ENCODE measurements at regions of chr5 and their contacts with region 1.

Region 1: DNA sequence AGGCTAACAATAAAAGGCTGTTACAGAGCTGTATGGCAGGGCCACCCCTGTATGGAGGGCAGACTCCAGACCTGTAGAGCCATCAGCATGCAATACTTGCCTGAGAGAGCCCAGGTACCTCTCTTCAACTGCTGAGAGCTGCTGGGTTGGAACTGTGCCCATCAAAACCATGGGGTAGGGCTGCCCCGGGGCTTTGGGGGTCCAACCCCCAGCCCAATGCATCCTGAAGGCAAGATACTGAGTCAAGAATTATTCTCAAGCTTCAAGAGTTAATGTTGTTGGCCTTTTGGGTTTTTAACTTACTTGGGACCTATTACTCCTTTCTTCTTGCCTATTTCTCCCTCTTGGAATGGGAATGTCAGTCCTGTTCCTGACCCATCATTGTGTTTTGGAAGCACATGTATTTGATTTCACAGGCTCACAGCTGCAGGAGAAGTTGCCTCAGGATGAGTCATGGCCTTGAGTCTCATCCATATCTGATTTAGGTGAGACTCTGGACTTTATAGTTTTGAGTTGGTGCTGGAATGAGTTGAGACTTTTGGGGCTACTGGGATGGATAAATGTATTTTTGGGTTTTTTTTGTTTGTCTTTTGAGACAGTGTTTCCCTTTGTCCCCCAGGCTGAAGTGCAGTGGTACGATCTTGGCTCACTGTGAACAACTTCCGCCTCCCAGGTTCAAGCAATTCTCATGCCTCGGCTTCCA is 21.0 kb upstream of the CDK7 start:
- DNase-seq: no peak
- H3K4me3 ChIP-seq: no peak overlapping the region
- H3K27ac ChIP-seq: no peak overlapping the region
- H3K4me1 ChIP-seq: no peaks in the 10 kb centered on the region
- H3K27me3 ChIP-seq: no peaks in the 10 kb centered on the region
- CTCF ChIP-seq: no peak
- EP300 ChIP-seq: no peak
- POLR2A ChIP-seq: no peak
- RAD21 ChIP-seq: no peak

Region 2: GRCh38 chr5:69166686-69167492 is 46.8 kb before region 1 on chr5 and contains the start of gene CCNB1:
- CTCF ChIA-PET with region 1: interaction called, 3 read pairs
- POLR2A ChIA-PET with region 1: interaction called, 11 read pairs
- DNase-seq: peak; percentile 98
- H3K4me3 ChIP-seq: peak within 1 kb of the TSS; percentile 74 to 95 (median 88)
- H3K27ac ChIP-seq: peak within 1 kb of the TSS; percentile 95
- H3K4me1 ChIP-seq: peaks cover 0 to 7% (median 4%) of the 10 kb centered on the region in 4 experiments; a peak in 5 of 7 replicates
- H3K27me3 ChIP-seq: no peaks in the 10 kb centered on the region
- CTCF ChIP-seq: no peak
- EP300 ChIP-seq: no peak
- POLR2A ChIP-seq: peak; percentile 73 to 97
- RAD21 ChIP-seq: no peak
- total RNA-seq, gene CCNB1: 338 and 342 TPM in 2 replicates

Region 3: GRCh38 chr5:69202497-69202896 is 11.2 kb before region 1 on chr5:
- CTCF ChIA-PET with region 1: interaction called, 4 read pairs
- POLR2A ChIA-PET with region 1: interaction called, 73 read pairs
- DNase-seq: no peak
- H3K4me3 ChIP-seq: no peak overlapping the region
- H3K27ac ChIP-seq: no peak overlapping the region
- H3K4me1 ChIP-seq: no peaks in the 10 kb centered on the region
- H3K27me3 ChIP-seq: no peaks in the 10 kb centered on the region
- CTCF ChIP-seq: no peak
- EP300 ChIP-seq: no peak
- POLR2A ChIP-seq: no peak
- RAD21 ChIP-seq: no peak